Activated CD4-positive, alpha-beta T cell treated with anti-CD3 and anti-CD28 coated beads, Interleukin-2, amount 10 ng/mL, durations not matched to agents 7 days and 5 days (primary cell): ENCODE measurements at regions of chr17 and their contacts with region 1.

Region 1: GRCh38 chr17:82105882-82106687 is 8.0 kb upstream of the FASN start:
- DNase-seq: peak; percentile 70
- H3K4me3 Mint-ChIP-seq: peak overlapping the region; percentile 86
- H3K27ac Mint-ChIP-seq: peak overlapping the region; percentile 96
- H3K4me1 Mint-ChIP-seq: peaks cover 46% of the 10 kb centered on the region
- H3K27me3 Mint-ChIP-seq: no peaks in the 10 kb centered on the region

Region 2: DNA sequence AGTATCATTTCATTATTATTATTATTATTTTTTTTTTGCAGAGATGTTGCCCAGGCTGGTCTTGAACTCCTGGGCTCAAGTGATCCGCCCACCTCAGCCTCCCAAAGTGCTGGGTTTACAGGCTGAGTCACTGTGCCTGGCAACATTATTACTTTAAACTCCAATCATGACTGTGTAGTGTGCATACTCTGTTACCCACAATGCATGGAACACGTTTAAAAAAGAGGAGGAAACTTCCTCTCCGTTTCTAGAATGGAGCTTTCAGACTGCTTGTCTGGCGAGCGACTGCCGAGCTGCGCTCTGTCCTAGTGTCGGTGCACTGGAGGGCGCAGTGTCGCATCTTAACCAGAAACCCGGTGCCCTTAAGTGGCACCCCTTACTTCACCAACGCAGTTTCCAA is 14.1 kb after region 1 on chr17:
- CTCF ChIA-PET with region 1: interaction called, 22 read pairs
- POLR2A ChIA-PET with region 1: interaction called, 3 read pairs
- DNase-seq: peak; percentile 51
- H3K4me3 Mint-ChIP-seq: no peak overlapping the region
- H3K27ac Mint-ChIP-seq: peak overlapping the region; percentile 82
- H3K4me1 Mint-ChIP-seq: peaks cover 49% of the 10 kb centered on the region
- H3K27me3 Mint-ChIP-seq: no peaks in the 10 kb centered on the region